Activated T-helper 1 cell treated with anti-CD3 and anti-CD28 coated beads, Interleukin-12 subunit alpha, Interleukin-12 subunit beta, Interleukin-2, Interleukin-4 antibody, amounts not matched to agents 30 ng/mL and 10 ng/mL and 1 ng/mL, durations not matched to agents 14 hours and 24 hours and 36 hours (primary cell): ENCODE measurements at regions of chr5 and their contacts with region 1.

Region 1: DNA sequence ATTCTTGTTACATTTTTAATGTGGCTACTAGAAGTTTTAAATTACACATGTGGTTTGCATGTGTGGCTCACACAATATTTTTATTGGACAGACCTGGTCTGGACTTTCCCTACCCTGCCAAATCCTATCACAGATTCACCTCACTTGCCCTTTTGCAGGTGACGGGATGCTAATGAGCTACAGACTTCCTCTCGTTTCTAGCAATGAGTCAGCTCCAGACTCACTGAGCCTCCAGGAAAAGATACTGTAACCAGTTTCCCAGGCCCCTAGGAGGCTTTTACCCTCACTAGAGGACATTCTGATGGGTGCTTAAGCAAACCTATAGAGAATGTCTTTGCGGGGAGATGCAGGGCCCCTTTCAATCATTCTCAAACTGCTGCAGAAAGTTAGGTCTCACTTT is 135.4 kb downstream of the WDR41 start:
- DNase-seq: peak; percentile 26
- H3K4me3 Mint-ChIP-seq: no peak overlapping the region
- H3K27ac Mint-ChIP-seq: no peak overlapping the region
- H3K4me1 Mint-ChIP-seq: peaks cover 18% of the 10 kb centered on the region
- H3K27me3 Mint-ChIP-seq: peaks cover 10% of the 10 kb centered on the region

Region 2: DNA sequence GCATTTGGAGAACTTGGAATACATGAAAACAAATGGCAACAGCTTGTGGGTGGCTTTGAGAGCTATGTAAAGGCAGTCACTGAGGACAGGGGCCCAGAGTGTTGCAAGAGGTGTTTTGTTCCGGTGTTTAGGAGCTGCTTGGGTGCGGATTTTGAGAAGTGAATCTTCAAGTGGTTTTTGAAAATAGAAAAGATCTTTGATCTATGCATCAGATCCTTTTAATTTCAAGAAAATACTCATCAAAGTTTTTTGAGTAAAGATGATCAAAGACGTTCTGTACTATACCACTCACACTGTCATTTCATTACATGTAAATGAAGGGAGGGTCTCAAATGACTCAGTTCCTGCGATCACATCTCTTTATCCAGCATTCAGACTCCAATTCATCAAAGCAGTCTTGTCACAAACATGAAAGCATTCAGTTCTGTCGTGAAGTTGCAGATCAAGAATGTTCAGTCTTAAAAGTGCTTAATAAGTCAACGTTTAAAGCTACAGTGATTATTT is 22.9 kb after region 1 on chr5:
- intact Hi-C with region 1: loop called (anchors 1 kb)
- DNase-seq: peak; percentile 32
- H3K4me3 Mint-ChIP-seq: no peak overlapping the region
- H3K27ac Mint-ChIP-seq: peak overlapping the region; percentile 37
- H3K4me1 Mint-ChIP-seq: peaks cover 30% of the 10 kb centered on the region
- H3K27me3 Mint-ChIP-seq: peaks cover 2% of the 10 kb centered on the region

Region 3: GRCh38 chr5:77400645-77401044 is 43.9 kb after region 1 on chr5:
- intact Hi-C with region 1: no loop called
- DNase-seq: no peak
- H3K4me3 Mint-ChIP-seq: no peak overlapping the region
- H3K27ac Mint-ChIP-seq: no peak overlapping the region
- H3K4me1 Mint-ChIP-seq: peaks cover 6% of the 10 kb centered on the region
- H3K27me3 Mint-ChIP-seq: peaks cover 4% of the 10 kb centered on the region

Region 4: GRCh38 chr5:77418601-77419591 is 62.2 kb after region 1 on chr5:
- intact Hi-C with region 1: no loop called
- DNase-seq: no peak
- H3K4me3 Mint-ChIP-seq: no peak overlapping the region
- H3K27ac Mint-ChIP-seq: no peak overlapping the region
- H3K4me1 Mint-ChIP-seq: no peaks in the 10 kb centered on the region
- H3K27me3 Mint-ChIP-seq: peaks cover 2% of the 10 kb centered on the region